Endothelial cell of umbilical vein (primary cell): ENCODE measurements at regions of chr1 and their contacts with region 1.

Region 1: DNA sequence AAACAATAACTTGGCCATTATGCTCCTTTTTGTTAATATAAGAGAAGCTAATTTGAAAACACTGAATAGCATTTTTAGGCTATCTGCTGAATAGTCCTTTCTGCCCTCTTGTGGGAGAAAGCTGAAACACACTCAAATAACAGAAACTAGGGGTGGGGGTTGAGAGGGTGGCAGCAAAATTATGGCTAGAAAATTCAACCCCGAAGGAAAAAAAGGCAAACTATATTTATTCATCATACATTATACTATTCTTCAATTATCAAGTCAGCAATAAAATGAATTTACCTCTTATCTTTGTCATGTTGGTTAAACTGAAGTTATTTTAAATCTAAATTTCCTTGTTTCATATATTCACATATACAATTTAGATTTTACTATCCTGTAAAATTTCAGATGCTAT is 255.9 kb downstream of the FAF1 start:
- DNase-seq: peak; percentile 58
- H3K4me3 ChIP-seq: no peak overlapping the region
- H3K27ac ChIP-seq: no peak overlapping the region
- H3K4me1 ChIP-seq: no peaks in the 10 kb centered on the region
- H3K27me3 ChIP-seq: no peaks in the 10 kb centered on the region
- CTCF ChIP-seq: peak; percentile 53 to 60
- POLR2A ChIP-seq: no peak

Region 2: DNA sequence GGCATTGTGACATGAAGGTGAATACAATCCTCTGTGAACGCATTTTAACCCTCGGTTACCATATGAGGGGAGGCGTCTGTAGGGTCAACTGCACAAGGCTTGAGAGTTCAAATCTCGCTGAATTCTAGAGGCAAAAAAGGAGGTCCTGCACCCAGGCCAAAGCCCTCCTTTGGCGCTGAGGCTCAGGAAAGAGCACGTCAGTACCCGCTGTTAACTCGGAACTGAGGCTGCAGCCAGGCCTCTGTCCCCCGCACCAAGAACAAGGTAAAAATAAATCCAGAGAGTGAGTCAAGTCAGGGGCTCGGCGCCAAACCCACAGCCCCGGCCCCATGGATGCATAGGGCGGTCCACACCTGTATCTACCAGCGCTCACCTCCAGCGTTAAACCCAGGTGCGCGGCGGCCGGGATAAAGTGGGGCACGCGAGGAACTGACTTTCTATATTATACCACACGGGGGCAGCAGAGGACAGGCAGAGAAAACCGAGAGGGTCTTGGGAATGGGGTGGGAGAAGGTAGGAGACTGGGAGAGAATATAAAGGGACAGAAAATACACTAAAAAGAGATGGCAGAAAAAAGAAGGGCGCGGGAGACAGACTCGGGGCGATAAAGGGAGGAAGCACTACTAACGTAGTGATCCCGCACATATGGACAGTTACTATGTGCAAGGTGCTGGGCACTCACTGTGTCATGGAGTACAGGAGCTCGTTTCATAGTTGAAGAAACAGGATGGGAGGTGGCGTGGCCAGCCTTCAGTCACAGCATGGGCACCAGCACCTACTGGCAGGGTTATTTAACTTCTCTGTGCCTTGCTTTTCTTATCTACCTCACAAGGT is 335.7 kb before region 1 on chr1:
- CTCF ChIA-PET with region 1: interaction called, 83 read pairs
- POLR2A ChIA-PET with region 1: no interaction called
- dilution Hi-C with region 1: no loop called
- intact Hi-C with region 1: loop called (anchors 1 kb)
- DNase-seq: peak; percentile 26
- H3K4me3 ChIP-seq: no peak overlapping the region
- H3K27ac ChIP-seq: no peak overlapping the region
- H3K4me1 ChIP-seq: no peaks in the 10 kb centered on the region
- H3K27me3 ChIP-seq: peaks cover 11 to 15% of the 10 kb centered on the region in 2 experiments
- CTCF ChIP-seq: peak; percentile 51 to 62
- POLR2A ChIP-seq: no peak

Region 3: GRCh38 chr1:50605186-50605875 is 98.8 kb before region 1 on chr1:
- CTCF ChIA-PET with region 1: interaction called, 27 read pairs
- POLR2A ChIA-PET with region 1: no interaction called
- dilution Hi-C with region 1: no loop called
- intact Hi-C with region 1: loop called (anchors 5 kb)
- DNase-seq: peak; percentile 69
- H3K4me3 ChIP-seq: no peak overlapping the region
- H3K27ac ChIP-seq: no peak overlapping the region
- H3K4me1 ChIP-seq: peaks cover 18% of the 10 kb centered on the region
- H3K27me3 ChIP-seq: no peaks in the 10 kb centered on the region
- CTCF ChIP-seq: peak; percentile 40 to 60
- POLR2A ChIP-seq: no peak

Region 4: DNA sequence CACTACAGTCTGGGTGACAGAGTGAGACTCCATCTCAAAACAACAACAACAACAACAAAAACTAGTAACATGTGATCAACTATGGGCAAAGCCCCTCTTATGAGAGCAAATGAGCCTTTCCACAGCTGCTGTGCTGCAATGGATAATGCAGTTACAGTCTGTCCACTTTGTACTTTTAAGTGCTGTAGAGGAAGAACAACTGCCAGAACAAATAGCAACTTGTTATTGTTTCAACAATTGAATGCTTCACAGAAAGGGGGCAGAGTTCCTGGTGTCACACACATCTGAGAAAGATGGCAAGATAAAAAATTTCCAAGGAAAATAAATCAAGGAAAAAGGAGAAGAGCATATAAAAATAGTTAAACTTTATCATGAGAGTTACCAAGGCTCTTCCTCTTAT is 37.3 kb before region 1 on chr1:
- CTCF ChIA-PET with region 1: interaction called, 10 read pairs
- POLR2A ChIA-PET with region 1: no interaction called
- dilution Hi-C with region 1: no loop called
- intact Hi-C with region 1: no loop called
- DNase-seq: peak; percentile 85
- H3K4me3 ChIP-seq: no peak overlapping the region
- H3K27ac ChIP-seq: peak overlapping the region; percentile 45
- H3K4me1 ChIP-seq: peaks cover 15% of the 10 kb centered on the region
- H3K27me3 ChIP-seq: no peaks in the 10 kb centered on the region
- CTCF ChIP-seq: peak in 1 of 2 donors; percentile 4
- POLR2A ChIP-seq: no peak

Region 5: DNA sequence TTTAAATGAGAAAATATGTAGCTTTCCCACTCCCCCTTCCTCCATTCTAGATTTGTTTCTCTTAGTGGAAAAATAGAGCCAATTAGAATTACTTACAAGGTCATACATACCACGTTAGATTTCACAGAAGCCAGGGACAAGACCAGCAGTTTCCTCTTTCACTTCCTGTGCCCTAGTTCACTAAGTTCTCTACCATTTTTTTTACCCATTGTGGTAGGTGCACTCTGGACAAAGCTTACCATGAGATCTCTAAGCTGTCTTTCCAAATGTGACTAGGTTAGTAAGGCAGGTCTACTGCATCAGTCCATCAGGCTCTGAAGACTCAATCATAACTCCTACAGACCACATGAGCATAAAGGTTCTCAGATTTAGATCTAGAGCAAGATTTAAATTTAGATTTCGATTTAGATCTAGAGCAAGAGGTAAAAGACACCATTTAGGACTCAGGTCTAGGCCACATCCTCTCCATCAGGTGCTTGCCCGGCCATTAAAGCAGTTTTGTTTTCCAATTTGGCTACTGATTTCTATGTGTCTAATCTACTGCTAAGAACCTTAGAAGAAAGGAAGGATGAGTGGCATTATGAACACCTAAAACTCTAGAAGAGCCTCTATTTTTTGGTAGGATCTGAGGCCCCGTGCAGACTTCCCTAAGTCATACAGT is 20.6 kb after region 1 on chr1:
- CTCF ChIA-PET with region 1: interaction called, 10 read pairs
- POLR2A ChIA-PET with region 1: no interaction called
- dilution Hi-C with region 1: no loop called
- intact Hi-C with region 1: no loop called
- DNase-seq: peak; percentile 33
- H3K4me3 ChIP-seq: no peak overlapping the region
- H3K27ac ChIP-seq: no peak overlapping the region
- H3K4me1 ChIP-seq: peaks cover 5% of the 10 kb centered on the region
- H3K27me3 ChIP-seq: no peaks in the 10 kb centered on the region
- CTCF ChIP-seq: no peak
- POLR2A ChIP-seq: no peak